GM12878 (cell line): ENCODE measurements at regions of chr1 and their contacts with region 1.

Region 1: DNA sequence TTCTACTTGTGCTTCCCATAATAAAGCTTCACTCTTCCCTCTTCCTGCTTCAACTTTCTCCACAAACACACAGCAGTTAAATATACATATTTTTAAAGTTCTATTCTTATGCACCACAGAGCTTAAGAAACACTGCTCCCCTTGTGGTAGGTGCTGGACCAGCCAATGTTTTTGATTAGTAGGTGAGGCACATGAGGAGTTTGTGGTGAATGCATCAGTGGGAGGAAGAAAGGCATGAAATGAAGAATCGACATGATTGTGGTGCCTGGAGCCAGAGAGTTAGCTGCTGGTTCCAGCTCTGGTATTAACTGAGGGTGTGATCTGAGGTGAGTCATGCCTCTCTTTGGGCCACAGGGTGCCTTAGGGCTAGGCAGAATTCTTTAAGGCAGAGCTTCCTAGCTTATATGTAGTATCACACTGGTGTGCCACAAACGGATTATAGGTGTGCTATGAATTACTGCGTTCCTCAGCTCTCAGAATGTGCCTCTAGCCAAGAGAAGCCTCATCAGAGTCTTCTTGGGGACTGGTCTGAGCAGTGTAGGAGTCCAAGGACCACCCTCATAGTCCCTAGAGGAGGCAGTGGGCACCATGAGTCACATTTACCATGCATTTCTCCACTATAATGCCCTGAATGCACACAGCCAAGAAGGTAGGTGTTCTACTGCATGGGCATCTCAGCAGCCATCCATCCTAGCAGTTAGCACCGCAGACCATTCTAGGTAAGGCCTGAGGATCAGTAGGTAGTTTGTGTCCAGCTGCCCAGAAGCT is 97.4 kb upstream of the SGIP1 start:
- DNase-seq: peak; percentile 44
- ATAC-seq: peak; percentile 85
- H3K4me3 ChIP-seq: no peak overlapping the region
- H3K27ac ChIP-seq: peak overlapping the region; percentile 7; the same call in 1 of the 2 replicates
- H3K4me1 ChIP-seq: peaks cover 31% of the 10 kb centered on the region
- H3K27me3 ChIP-seq: no peaks in the 10 kb centered on the region
- CTCF ChIP-seq: peak; percentile 27 to 56 (median 50); a peak in 5 of 6 replicates
- EP300 ChIP-seq: no peak
- POLR2A ChIP-seq: no peak
- RAD21 ChIP-seq: peak; percentile 58

Region 2: DNA sequence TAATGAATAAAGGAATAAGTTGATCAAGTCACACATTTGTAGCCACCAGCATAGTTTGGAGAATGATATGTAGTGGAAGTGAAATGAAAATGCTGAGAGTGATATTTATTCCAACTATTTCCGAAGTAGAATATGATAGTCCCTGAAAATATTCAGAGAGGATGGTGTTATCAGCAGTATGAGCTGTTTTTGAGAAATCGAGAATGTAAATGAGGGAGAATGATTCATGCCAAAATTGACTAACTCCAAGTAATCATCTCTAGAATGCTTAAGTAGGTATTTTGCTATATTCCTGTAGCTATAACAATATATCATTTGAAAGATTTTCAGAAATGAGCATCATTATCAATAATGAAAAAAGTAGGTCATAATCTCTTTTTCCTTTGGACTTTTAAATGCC is 465.0 kb before region 1 on chr1:
- CTCF ChIA-PET with region 1: no interaction called
- POLR2A ChIA-PET with region 1: no interaction called
- RAD21 ChIA-PET with region 1: no interaction called
- SMC1A ChIA-PET with region 1: no interaction called
- in situ Hi-C with region 1: no loop called
- intact Hi-C with region 1: no loop called
- DNase-seq: no peak
- ATAC-seq: no peak
- H3K4me3 ChIP-seq: no peak overlapping the region
- H3K27ac ChIP-seq: no peak overlapping the region
- H3K4me1 ChIP-seq: no peaks in the 10 kb centered on the region
- H3K27me3 ChIP-seq: no peaks in the 10 kb centered on the region
- CTCF ChIP-seq: no peak
- EP300 ChIP-seq: no peak
- POLR2A ChIP-seq: no peak
- RAD21 ChIP-seq: no peak

Region 3: GRCh38 chr1:66360285-66360724 is 76.3 kb before region 1 on chr1:
- CTCF ChIA-PET with region 1: interaction called, 396 read pairs
- POLR2A ChIA-PET with region 1: no interaction called
- RAD21 ChIA-PET with region 1: interaction called, 27 read pairs
- SMC1A ChIA-PET with region 1: interaction called, 33 read pairs
- in situ Hi-C with region 1: no loop called
- intact Hi-C with region 1: no loop called
- DNase-seq: no peak
- ATAC-seq: peak; percentile 51
- H3K4me3 ChIP-seq: no peak overlapping the region
- H3K27ac ChIP-seq: no peak overlapping the region
- H3K4me1 ChIP-seq: peaks cover 16% of the 10 kb centered on the region
- H3K27me3 ChIP-seq: no peaks in the 10 kb centered on the region
- CTCF ChIP-seq: peak; percentile 30 to 44 (median 37); a peak in 4 of 6 replicates
- EP300 ChIP-seq: no peak
- POLR2A ChIP-seq: no peak
- RAD21 ChIP-seq: peak; percentile 59

Region 4: DNA sequence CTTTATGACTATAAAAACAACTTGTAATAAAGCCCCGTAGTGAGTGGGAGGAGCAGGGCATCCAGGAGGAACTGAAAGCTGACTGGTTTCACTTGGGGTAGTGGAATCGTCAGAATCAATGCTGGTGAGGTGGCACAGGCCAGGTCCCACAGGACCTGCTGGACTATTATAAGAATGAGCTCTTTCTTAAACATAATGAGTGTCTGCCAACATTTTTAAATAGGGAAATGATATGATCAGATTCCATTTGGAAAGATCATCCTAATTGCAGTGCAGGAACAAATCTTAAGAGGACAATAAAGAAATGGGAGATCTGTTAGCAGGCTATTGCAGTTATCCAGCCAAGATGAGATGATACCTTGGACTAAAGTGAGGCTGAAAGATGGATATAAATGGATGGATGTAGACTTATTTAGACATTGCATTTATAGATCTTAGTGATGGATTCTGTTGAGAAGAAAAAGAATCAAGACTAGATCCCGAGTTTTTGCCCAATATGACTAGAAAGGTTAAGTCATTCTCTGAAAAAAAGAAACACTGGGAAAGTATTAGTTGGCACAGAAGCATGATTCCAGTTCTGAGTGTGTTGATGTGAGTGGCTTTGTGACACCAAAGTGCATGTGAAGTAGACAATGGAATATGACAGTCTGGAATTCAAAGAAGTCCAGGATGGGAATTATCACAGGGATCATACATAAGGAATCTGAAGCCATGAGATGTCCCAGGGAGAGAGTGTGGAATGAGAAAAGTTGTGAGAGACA is 55.9 kb before region 1 on chr1:
- CTCF ChIA-PET with region 1: interaction called, 396 read pairs
- POLR2A ChIA-PET with region 1: interaction called, 8 read pairs
- RAD21 ChIA-PET with region 1: interaction called, 53 read pairs
- SMC1A ChIA-PET with region 1: interaction called, 196 read pairs
- in situ Hi-C with region 1: no loop called
- intact Hi-C with region 1: no loop called
- DNase-seq: peak; percentile 87
- ATAC-seq: peak; percentile 95
- H3K4me3 ChIP-seq: peak overlapping the region; percentile 55
- H3K27ac ChIP-seq: peak overlapping the region; percentile 83
- H3K4me1 ChIP-seq: peaks cover 39% of the 10 kb centered on the region
- H3K27me3 ChIP-seq: no peaks in the 10 kb centered on the region
- CTCF ChIP-seq: no peak
- EP300 ChIP-seq: peak; percentile 99
- POLR2A ChIP-seq: no peak
- RAD21 ChIP-seq: no peak

Region 5: DNA sequence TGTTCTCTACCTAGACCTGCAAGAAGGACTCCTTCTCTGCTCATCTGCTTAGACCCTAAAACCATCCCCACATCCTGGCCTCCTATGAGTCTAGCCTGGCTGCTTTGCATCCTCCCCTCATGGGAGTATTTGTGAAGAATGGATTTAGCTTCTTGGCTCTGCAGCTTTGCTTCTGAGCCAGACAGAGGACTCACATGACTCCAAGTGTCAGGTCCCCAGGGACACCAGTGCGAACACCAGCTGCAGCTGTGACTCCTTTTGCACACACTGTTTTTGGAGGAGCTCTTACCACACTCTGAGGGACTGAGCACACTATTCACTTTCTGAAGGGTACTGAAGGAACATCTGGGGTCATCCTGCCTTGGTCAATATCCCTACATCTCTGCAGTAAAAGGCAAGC is 34.4 kb before region 1 on chr1:
- CTCF ChIA-PET with region 1: interaction called, 25 read pairs
- POLR2A ChIA-PET with region 1: interaction called, 10 read pairs
- RAD21 ChIA-PET with region 1: interaction called, 31 read pairs
- SMC1A ChIA-PET with region 1: interaction called, 44 read pairs
- in situ Hi-C with region 1: loop called (anchors 5 kb)
- intact Hi-C with region 1: loop called (anchors 2 kb)
- DNase-seq: peak; percentile 87
- ATAC-seq: peak; percentile 76
- H3K4me3 ChIP-seq: no peak overlapping the region
- H3K27ac ChIP-seq: peak overlapping the region; percentile 77
- H3K4me1 ChIP-seq: peaks cover 58% of the 10 kb centered on the region
- H3K27me3 ChIP-seq: no peaks in the 10 kb centered on the region
- CTCF ChIP-seq: no peak
- EP300 ChIP-seq: peak; percentile 88 to 95; a peak in 3 of 4 replicates
- POLR2A ChIP-seq: 0 out of 2 replicates have a peak, but pooled peaks have one; percentile 42
- RAD21 ChIP-seq: no peak

Region 6: DNA sequence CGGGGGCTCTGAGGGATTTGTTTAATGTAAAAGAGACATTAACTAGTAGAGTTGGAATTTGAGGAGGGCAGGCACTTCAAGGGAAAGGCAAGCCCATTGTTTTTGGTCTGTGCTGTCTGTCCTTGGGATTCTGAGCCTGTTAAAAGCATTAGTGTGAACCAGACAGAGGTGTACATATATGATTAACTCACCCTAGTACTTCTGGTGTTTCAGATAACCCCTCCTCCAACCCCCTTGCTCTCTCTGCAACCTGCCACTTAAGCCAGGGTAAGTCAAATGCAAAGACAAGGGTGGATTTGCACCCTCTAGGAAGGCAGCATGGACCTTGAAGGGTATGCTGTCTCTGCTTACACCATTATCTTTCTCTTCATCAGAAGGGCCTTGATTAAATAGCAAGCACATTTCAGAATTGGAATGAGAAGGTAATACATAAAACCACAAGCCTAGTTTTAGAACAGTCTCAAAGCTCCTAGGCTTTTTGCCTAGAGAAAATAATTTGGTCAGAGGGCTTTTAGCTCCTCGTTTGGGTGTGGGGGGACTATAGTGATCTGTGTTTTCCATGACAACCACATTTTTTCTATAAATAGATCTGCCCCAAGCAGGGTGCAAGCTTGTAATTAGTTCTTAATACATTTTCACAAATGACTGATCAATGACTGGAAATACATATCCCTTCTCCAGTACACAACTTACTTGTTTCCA is 23.3 kb before region 1 on chr1:
- CTCF ChIA-PET with region 1: interaction called, 15 read pairs
- POLR2A ChIA-PET with region 1: no interaction called
- RAD21 ChIA-PET with region 1: interaction called, 3 read pairs
- SMC1A ChIA-PET with region 1: interaction called, 21 read pairs
- in situ Hi-C with region 1: no loop called
- intact Hi-C with region 1: no loop called
- DNase-seq: no peak
- ATAC-seq: peak; percentile 86
- H3K4me3 ChIP-seq: no peak overlapping the region
- H3K27ac ChIP-seq: no peak overlapping the region
- H3K4me1 ChIP-seq: no peaks in the 10 kb centered on the region; the same call in 1 of the 2 replicates
- H3K27me3 ChIP-seq: no peaks in the 10 kb centered on the region
- CTCF ChIP-seq: no peak
- EP300 ChIP-seq: no peak
- POLR2A ChIP-seq: no peak
- RAD21 ChIP-seq: no peak

Region 7: GRCh38 chr1:66452162-66452561 is 15.6 kb after region 1 on chr1:
- CTCF ChIA-PET with region 1: interaction called, 66 read pairs
- POLR2A ChIA-PET with region 1: no interaction called
- RAD21 ChIA-PET with region 1: interaction called, 51 read pairs
- SMC1A ChIA-PET with region 1: interaction called, 68 read pairs
- in situ Hi-C with region 1: no loop called
- intact Hi-C with region 1: no loop called
- DNase-seq: no peak
- ATAC-seq: peak; percentile 25; the same call in 1 of the 3 replicates
- H3K4me3 ChIP-seq: no peak overlapping the region
- H3K27ac ChIP-seq: no peak overlapping the region
- H3K4me1 ChIP-seq: no peaks in the 10 kb centered on the region
- H3K27me3 ChIP-seq: no peaks in the 10 kb centered on the region
- CTCF ChIP-seq: no peak
- EP300 ChIP-seq: no peak
- POLR2A ChIP-seq: no peak
- RAD21 ChIP-seq: no peak

Region 8: GRCh38 chr1:66576645-66577044 is 140.1 kb after region 1 on chr1:
- CTCF ChIA-PET with region 1: no interaction called
- POLR2A ChIA-PET with region 1: no interaction called
- RAD21 ChIA-PET with region 1: no interaction called
- SMC1A ChIA-PET with region 1: no interaction called
- in situ Hi-C with region 1: no loop called
- intact Hi-C with region 1: no loop called
- DNase-seq: no peak
- ATAC-seq: no peak
- H3K4me3 ChIP-seq: no peak overlapping the region
- H3K27ac ChIP-seq: no peak overlapping the region
- H3K4me1 ChIP-seq: no peaks in the 10 kb centered on the region
- H3K27me3 ChIP-seq: no peaks in the 10 kb centered on the region
- CTCF ChIP-seq: no peak
- EP300 ChIP-seq: no peak
- POLR2A ChIP-seq: no peak
- RAD21 ChIP-seq: no peak